A673 (cell line): ENCODE measurements at regions of chr9 and their contacts with region 1.

Region 1: GRCh38 chr9:28820741-28821140 is 1247.5 kb upstream of the C9orf72 start:
- DNase-seq: peak; percentile 98
- H3K4me3 ChIP-seq: no peak overlapping the region
- H3K27ac ChIP-seq: peak overlapping the region; percentile 64
- H3K4me1 ChIP-seq: peaks cover 57% of the 10 kb centered on the region
- H3K27me3 ChIP-seq: no peaks in the 10 kb centered on the region
- CTCF ChIP-seq: peak; percentile 69

Region 2: DNA sequence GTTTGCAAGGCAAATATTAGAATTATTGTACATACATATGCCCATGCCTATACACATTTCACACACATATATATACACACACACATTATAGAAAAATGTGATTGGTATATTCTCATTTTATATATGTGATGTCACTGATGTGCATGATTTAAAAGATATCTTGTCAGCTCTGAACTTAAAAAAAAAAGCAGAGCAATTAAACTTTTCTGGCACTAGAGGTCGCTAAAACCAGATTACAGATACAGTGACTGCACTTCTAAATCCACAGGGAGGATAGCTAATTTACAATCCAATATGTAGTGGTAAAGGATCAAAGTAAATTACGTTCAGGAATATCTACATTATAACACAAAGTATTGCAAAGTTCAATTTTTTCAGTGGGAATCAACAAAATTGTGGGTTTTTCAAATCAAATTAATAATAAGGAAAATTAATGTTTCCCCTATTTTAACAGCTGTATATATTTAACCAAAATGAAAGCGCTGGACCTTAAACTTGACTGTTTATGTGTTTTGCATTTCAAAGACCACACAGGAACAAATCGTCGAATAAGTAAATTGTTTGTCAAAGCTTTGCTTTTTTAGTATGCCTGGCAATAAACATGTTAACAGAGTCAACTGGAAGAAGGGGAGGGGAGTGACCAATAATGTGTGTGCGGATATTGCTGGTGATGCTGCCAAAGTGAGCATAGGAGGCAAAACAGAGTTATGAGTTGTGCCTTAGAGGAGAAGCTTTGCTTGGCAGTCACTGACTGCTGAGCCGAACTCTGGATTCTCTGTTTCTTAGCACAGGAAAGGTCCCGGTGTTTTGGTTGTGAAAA is 46.1 kb before region 1 on chr9:
- CTCF ChIA-PET with region 1: interaction called, 4 read pairs
- POLR2A ChIA-PET with region 1: no interaction called
- intact Hi-C with region 1: loop called (anchors 10 kb)
- DNase-seq: peak; percentile 79
- H3K4me3 ChIP-seq: no peak overlapping the region
- H3K27ac ChIP-seq: peak overlapping the region; percentile 14
- H3K4me1 ChIP-seq: peaks cover 43% of the 10 kb centered on the region
- H3K27me3 ChIP-seq: no peaks in the 10 kb centered on the region
- CTCF ChIP-seq: peak; percentile 80

Region 3: DNA sequence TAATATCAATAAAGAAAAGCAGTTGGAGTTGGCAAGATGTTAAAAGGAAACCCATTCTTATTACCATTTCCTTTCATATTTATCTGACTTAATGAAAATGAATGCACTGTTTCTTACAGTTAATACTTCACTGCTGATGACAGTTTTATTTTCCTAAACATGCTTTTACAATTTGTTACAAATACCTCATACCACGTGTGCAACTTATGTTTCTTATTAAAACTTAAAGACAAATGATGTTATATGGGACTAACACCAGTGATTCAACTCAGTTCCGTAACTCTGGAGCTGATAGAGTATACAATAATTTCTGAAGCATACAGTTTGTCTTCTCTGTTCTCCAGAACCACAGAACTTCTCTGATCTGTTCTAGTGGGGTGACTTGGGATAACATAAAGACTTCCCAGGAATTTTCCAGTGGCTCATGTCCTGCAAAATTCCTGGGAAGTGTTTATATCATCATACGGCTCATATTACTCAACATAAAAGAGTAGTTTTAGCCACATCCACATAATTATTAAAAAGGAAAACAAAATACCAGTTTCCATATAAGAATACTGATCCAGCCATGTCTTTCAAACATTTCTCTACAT is 11.5 kb after region 1 on chr9:
- CTCF ChIA-PET with region 1: no interaction called
- POLR2A ChIA-PET with region 1: no interaction called
- intact Hi-C with region 1: no loop called
- DNase-seq: no peak
- H3K4me3 ChIP-seq: no peak overlapping the region
- H3K27ac ChIP-seq: no peak overlapping the region
- H3K4me1 ChIP-seq: peaks cover 23% of the 10 kb centered on the region
- H3K27me3 ChIP-seq: no peaks in the 10 kb centered on the region
- CTCF ChIP-seq: no peak

Region 4: GRCh38 chr9:28922891-28923290 is 102.2 kb after region 1 on chr9:
- CTCF ChIA-PET with region 1: no interaction called
- POLR2A ChIA-PET with region 1: no interaction called
- intact Hi-C with region 1: loop called (anchors 2 kb)
- DNase-seq: peak; percentile 17
- H3K4me3 ChIP-seq: peak overlapping the region; percentile 15
- H3K27ac ChIP-seq: no peak overlapping the region
- H3K4me1 ChIP-seq: peaks cover 39% of the 10 kb centered on the region
- H3K27me3 ChIP-seq: no peaks in the 10 kb centered on the region
- CTCF ChIP-seq: no peak

Region 5: DNA sequence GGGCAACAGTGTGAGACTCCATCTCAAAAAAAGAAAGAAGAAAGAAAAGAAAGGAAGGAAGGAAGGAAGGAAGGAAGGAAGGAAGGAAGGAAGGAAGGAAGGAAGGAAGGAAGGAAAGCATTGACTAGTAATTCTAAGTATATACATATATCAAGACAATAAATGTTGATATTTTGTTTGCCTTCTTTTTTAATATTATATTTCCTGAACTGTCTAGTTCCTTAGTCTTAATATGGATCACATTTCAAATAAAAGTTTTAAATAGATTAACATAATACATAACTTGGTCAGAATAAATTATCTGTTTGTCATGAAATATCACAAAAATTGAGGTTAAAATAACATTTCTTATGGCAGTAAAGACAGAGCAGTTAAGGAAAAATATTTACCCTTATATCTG is 200.9 kb after region 1 on chr9:
- CTCF ChIA-PET with region 1: no interaction called
- POLR2A ChIA-PET with region 1: interaction called, 3 read pairs
- intact Hi-C with region 1: loop called (anchors 1 kb)
- DNase-seq: peak; percentile 84
- H3K4me3 ChIP-seq: peak overlapping the region; percentile 17
- H3K27ac ChIP-seq: peak overlapping the region; percentile 95
- H3K4me1 ChIP-seq: peaks cover 70% of the 10 kb centered on the region
- H3K27me3 ChIP-seq: no peaks in the 10 kb centered on the region
- CTCF ChIP-seq: no peak

Region 6: DNA sequence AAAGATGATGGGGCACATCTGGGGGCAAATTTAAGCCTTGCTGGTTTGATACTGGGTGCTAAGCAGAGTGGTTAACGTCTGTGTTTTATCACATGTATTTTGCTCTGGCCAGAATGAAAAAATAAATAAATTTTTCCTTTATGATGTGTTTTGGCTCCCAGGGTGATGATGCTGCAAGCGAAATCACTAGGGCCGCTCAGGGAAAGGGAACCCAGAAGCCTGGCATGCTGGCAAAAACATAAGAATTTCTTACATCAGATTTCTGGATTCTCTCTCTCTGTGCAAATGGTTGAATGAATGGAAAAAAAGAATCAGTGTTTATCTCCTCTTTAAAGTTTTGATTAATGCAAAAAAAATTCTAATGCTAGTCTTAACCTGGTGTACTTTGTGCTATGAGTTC is 727.7 kb after region 1 on chr9:
- CTCF ChIA-PET with region 1: no interaction called
- POLR2A ChIA-PET with region 1: no interaction called
- intact Hi-C with region 1: loop called (anchors 5 kb)
- DNase-seq: no peak
- H3K4me3 ChIP-seq: no peak overlapping the region
- H3K27ac ChIP-seq: no peak overlapping the region
- H3K4me1 ChIP-seq: no peaks in the 10 kb centered on the region
- H3K27me3 ChIP-seq: no peaks in the 10 kb centered on the region
- CTCF ChIP-seq: no peak